Activated T-helper 2 cell treated with anti-CD3 and anti-CD28 coated beads, Interferon-gamma antibody, Interleukin-2, Interleukin-4, amounts not matched to agents 10 μg/mL and 5 μg/mL and 100 μg/mL, durations not matched to agents 14 hours and 24 hours and 36 hours (primary cell): ENCODE measurements at regions of chr12 and their contacts with region 1.

Region 1: GRCh38 chr12:11553871-11554533 is 95.5 kb upstream of the ETV6 start:
- DNase-seq: peak; percentile 34
- H3K4me3 Mint-ChIP-seq: no peak overlapping the region
- H3K27ac Mint-ChIP-seq: peak overlapping the region; percentile 31
- H3K4me1 Mint-ChIP-seq: peaks cover 22% of the 10 kb centered on the region
- H3K27me3 Mint-ChIP-seq: peaks cover 50% of the 10 kb centered on the region

Region 2: DNA sequence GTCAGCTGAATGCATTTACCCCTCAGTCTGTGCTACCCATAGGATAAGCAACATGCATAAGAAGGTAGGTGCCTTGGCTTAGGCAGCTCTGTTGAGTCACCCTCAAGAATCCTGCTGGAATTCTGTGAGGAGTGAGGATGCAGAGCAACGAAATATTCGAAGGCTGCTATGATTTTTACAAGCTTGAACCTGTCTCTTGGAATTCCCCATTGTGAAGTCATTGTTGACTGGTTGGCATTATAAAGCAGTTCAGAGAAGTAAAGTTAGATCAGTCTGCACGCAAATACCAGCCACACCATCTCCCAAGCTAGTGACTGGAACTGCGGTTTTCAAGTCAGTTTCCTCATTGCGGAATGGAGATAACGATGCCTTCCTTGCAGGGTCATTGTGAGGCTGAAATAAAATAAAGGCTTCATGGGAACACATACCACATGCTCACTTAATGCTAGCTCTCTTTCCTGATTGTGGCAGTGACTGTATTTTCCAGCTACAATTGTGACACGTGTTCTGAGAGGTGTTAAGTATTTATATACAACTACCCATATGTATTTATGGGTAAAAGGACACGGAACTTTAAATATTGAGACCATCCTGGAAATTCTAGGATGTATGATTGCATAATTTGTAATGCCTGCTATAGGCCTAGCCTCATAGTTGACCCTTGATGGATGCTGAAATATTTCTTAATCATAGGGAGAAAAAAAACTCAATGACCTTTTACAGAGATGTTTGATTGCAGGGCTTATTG is 192.2 kb after region 1 on chr12:
- intact Hi-C with region 1: loop called (anchors 10 kb)
- DNase-seq: no peak
- H3K4me3 Mint-ChIP-seq: no peak overlapping the region
- H3K27ac Mint-ChIP-seq: peak overlapping the region; percentile 17
- H3K4me1 Mint-ChIP-seq: peaks cover 35% of the 10 kb centered on the region
- H3K27me3 Mint-ChIP-seq: no peaks in the 10 kb centered on the region

Region 3: GRCh38 chr12:12334367-12335040 is 780.5 kb after region 1 on chr12:
- intact Hi-C with region 1: loop called (anchors 5 kb)
- DNase-seq: peak; percentile 41
- H3K4me3 Mint-ChIP-seq: no peak overlapping the region
- H3K27ac Mint-ChIP-seq: no peak overlapping the region
- H3K4me1 Mint-ChIP-seq: peaks cover 36% of the 10 kb centered on the region
- H3K27me3 Mint-ChIP-seq: peaks cover 4% of the 10 kb centered on the region